A673 (cell line): ENCODE measurements at regions of chr3 and their contacts with region 1.

Region 1: DNA sequence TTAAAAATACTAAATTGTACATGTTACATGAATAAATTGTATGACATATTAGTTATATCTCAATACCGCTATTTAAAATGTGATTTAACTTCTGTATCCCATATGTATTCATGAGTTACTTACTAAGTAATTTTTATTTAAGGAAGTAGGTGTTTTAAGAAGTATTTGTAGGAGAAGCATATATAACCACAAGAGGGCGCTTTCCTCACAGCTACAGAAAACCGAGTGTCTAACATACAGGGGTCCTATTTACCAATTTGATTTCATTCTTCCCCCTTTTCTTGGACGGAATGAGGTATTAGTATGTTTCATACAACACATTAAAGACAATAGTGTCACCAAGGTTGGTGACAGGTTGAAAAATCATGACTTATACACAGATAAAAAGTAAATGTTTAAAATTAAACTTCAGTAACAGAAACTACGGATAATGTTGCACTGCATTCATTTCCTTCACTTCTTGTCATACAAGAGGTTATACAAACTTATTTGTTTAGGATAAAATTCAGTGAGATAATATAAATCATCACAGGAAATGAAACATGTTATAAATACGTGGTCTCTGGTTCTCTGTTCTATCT is 253.6 kb downstream of the MAGI1 start:
- DNase-seq: peak; percentile 75
- H3K4me3 ChIP-seq: no peak overlapping the region
- H3K27ac ChIP-seq: peak overlapping the region; percentile 57
- H3K4me1 ChIP-seq: peaks cover 39% of the 10 kb centered on the region
- H3K27me3 ChIP-seq: no peaks in the 10 kb centered on the region
- CTCF ChIP-seq: peak; percentile 60

Region 2: DNA sequence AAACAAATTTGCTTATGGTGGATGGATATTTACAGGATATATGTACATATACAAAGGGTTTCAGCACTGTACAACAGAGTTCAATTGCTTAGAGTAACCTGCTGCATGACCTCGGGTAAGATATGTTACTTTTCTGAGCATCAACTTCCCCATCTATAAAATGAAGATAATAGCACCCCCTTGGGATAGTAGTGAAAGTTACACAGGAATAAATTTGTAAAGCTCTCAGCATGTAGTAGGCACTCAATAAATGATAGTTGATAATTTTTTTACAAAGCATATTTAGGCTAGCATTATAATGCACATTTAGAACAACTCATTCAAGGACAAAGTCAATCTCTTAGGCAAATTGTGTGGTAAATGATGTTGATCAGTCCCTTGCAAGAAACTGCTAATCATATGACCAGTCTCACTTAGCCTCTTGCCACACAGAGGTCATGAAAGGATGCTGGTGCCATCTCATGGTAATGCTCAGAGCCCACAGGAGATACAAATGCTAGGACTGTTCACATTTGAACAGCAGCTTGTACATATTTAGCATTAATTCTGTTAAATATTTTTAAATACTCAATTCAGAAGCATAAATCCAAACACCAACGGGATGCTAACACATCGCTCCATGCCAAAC is 129.7 kb after region 1 on chr3:
- CTCF ChIA-PET with region 1: no interaction called
- POLR2A ChIA-PET with region 1: no interaction called
- intact Hi-C with region 1: loop called (anchors 5 kb)
- DNase-seq: peak; percentile 47
- H3K4me3 ChIP-seq: no peak overlapping the region
- H3K27ac ChIP-seq: no peak overlapping the region
- H3K4me1 ChIP-seq: no peaks in the 10 kb centered on the region
- H3K27me3 ChIP-seq: no peaks in the 10 kb centered on the region
- CTCF ChIP-seq: peak; percentile 32; the same call in 1 of the 2 replicates

Region 3: DNA sequence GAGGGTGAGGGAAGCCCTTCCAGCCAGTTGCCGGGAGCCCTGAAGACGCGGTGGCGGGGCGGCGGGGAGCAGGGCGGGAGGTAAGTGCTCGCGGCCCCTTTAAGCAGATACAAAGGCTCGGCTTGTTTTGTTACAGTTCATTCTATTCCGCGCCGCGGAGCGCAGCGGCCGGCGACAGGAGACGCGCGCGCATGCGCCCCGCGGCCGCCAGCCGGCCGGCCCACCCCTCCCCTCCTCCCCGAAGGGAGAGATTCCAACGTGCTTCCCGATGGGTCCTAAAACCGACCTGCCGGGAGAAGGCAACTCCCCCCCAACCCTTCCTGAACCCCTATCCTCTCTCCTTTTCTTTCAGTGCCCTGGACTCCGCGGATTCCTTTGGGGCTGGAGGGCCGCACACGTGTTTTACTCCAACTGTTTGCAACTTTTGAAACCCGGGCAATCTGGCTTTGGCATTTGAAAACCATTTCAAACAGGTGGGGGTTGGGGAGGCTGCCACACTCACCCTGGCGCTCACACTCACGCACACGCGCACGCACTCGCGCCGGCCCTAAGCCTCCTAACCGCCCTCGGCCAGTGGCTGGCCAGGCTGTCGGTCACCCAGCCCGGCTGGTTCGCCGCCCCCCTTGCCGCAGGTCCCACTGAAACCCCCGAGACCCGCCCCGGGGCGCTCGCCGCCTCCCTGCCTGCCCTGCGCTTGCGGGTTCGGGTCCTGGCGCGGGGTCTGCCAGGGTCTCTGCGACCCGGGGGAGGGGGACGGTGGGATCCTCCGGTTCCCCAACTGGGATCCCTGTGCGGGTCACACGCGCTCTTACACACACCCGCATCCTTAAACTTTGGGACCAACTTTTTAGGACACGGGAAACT is 253.8 kb after region 1 on chr3 and contains the start of gene MAGI1:
- CTCF ChIA-PET with region 1: no interaction called
- POLR2A ChIA-PET with region 1: no interaction called
- intact Hi-C with region 1: loop called (anchors 5 kb)
- DNase-seq: peak; percentile 91
- H3K4me3 ChIP-seq: peak within 1 kb of the TSS; percentile 85
- H3K27ac ChIP-seq: peak within 1 kb of the TSS; percentile 91
- H3K4me1 ChIP-seq: no peaks in the 10 kb centered on the region
- H3K27me3 ChIP-seq: no peaks in the 10 kb centered on the region
- CTCF ChIP-seq: no peak
- total RNA-seq, gene MAGI1: 30.5 and 36.1 TPM in 2 replicates

Region 4: GRCh38 chr3:66053550-66054094 is 268.5 kb after region 1 on chr3:
- CTCF ChIA-PET with region 1: no interaction called
- POLR2A ChIA-PET with region 1: no interaction called
- intact Hi-C with region 1: no loop called
- DNase-seq: peak; percentile 30
- H3K4me3 ChIP-seq: no peak overlapping the region
- H3K27ac ChIP-seq: no peak overlapping the region
- H3K4me1 ChIP-seq: peaks cover 21% of the 10 kb centered on the region
- H3K27me3 ChIP-seq: no peaks in the 10 kb centered on the region
- CTCF ChIP-seq: no peak

Region 5: GRCh38 chr3:66138336-66139313 is 353.5 kb after region 1 on chr3:
- CTCF ChIA-PET with region 1: interaction called, 8 read pairs
- POLR2A ChIA-PET with region 1: no interaction called
- intact Hi-C with region 1: loop called (anchors 2 kb)
- DNase-seq: peak; percentile 78
- H3K4me3 ChIP-seq: no peak overlapping the region
- H3K27ac ChIP-seq: no peak overlapping the region
- H3K4me1 ChIP-seq: peaks cover 7% of the 10 kb centered on the region
- H3K27me3 ChIP-seq: no peaks in the 10 kb centered on the region
- CTCF ChIP-seq: peak; percentile 65